Heart right ventricle (tissue), 16 donors: ENCODE measurements at regions of chr19 and their contacts with region 1.

Region 1: DNA sequence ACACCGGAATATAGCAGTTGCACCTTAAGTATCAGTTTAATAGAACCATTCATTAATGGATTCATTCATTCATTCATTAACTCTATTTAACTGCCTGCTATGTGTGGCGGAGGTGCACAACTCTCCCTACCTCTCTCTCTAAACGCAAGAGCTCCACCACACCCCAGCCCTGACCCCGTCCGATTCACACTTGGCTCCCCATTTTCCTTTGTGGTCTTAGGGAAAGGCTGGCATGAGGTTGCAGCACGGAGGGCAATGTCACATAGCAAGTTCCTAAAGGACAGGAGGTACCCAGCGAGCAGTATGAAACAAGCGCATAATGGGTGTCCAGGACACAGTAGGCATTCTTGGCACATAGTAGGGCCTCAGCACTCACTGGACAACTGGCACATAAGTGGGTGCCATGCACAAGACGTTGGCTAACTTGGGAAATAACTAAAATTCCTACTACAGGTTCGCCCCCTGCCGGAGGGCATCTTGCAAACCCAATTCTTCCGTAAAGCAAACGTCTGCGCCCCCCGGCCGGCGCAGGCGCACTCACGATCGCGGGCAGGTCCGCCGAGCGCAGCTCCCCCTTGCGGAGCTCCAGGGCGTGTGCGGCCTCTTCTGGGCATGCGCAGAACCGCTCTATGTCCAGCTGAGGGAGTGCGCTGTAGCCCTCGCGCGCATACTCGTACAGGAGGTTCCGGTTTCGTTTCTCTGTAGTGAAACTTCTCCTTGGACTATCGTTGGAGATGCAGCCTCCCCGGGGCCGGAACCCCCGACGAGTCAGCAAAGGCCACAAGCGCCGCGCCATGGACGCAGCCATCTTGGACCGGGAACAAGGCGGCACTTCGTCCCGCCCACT is at the start of gene SARS2:
- DNase-seq: peak; percentile 91 to 93
- ATAC-seq: peak; percentile 87 to 95 (median 90)
- H3K4me3 ChIP-seq: peak within 1 kb of the TSS; percentile 64 to 93 (median 74)
- H3K27ac ChIP-seq: peak within 1 kb of the TSS; percentile 74 to 94 (median 88)
- H3K4me1 ChIP-seq: peaks cover 9 to 45% (median 30%) of the 10 kb centered on the region in 9 donors
- H3K27me3 ChIP-seq: no peaks in the 10 kb centered on the region
- CTCF ChIP-seq: peak; percentile 99 to 100 (median 100)
- total RNA-seq, gene SARS2: 14.7 to 21.9 (median 18.9) TPM

Region 2: GRCh38 chr19:38402967-38403861 is 526.9 kb before region 1 on chr19 and contains the start of gene FAM98C:
- intact Hi-C with region 1: loop called in 5 of 10 experiments (anchors 2 to 10 kb)
- DNase-seq: peak; percentile 93 to 97
- ATAC-seq: peak; percentile 98 to 100 (median 99)
- H3K4me3 ChIP-seq: peak within 1 kb of the TSS; percentile 68 to 99 (median 87)
- H3K27ac ChIP-seq: peak within 1 kb of the TSS in 9 of 10 donors; percentile 68 to 95 (median 82)
- H3K4me1 ChIP-seq: peaks cover 0 to 17% (median 11%) of the 10 kb centered on the region in 9 donors
- H3K27me3 ChIP-seq: peaks cover 8 to 35% (median 27%) of the 10 kb centered on the region in 7 donors
- CTCF ChIP-seq: peak; percentile 95 to 100 (median 100)
- total RNA-seq, gene FAM98C: 9.8 to 16.1 (median 12.2) TPM

Region 3: GRCh38 chr19:38544034-38544958 is 385.9 kb before region 1 on chr19:
- intact Hi-C with region 1: loop called in 4 of 10 experiments (anchors 5 to 10 kb)
- DNase-seq: peak; percentile 38 to 50
- ATAC-seq: peak; percentile 70 to 86 (median 80)
- H3K4me3 ChIP-seq: peak overlapping the region in 3 of 10 donors; percentile 6 to 17 (median 12)
- H3K27ac ChIP-seq: no peak overlapping the region
- H3K4me1 ChIP-seq: peaks cover 0 to 11% (median 6%) of the 10 kb centered on the region in 9 donors
- H3K27me3 ChIP-seq: no peaks in the 10 kb centered on the region
- CTCF ChIP-seq: peak; percentile 39 to 75 (median 63)

Region 4: DNA sequence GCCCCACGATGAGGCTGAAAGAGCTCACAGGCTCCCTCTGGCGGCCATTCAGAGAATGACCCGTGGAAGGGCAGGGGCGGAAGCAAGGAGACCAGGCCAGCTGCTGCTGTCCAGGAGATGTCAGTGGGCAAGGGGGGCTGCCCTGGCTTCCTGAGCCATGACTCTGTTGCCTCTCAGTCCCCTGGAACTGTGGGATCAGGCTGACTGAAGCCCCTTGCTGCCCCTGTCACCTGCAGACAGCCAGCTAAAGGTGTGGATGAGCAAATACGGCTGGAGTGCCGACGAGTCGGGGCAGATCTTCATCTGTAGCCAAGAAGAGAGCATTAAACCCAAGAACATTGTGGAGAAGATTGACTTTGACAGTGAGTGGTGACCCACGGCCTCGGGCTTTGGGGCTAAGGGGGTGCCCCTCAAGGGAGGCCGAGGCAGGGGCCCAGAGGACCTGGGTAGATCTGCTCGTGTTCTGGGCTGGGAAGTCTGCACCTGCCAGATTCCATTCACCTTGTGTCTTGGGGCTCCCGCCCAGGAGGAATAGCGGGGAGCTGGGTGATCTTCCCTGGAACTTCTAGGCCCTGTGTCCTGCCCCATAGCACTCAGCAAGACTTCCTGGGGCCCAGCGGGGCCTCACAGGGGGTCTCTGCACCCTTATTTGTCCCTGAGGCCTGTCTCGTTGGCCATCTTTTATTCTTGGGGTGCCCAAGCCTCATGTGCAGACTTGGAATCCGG is 295.2 kb before region 1 on chr19:
- intact Hi-C with region 1: loop called in 4 of 10 experiments (anchors 5 to 10 kb)
- DNase-seq: peak; percentile 78 to 82
- ATAC-seq: peak in 7 of 8 donors; percentile 41 to 65 (median 47)
- H3K4me3 ChIP-seq: no peak overlapping the region
- H3K27ac ChIP-seq: peak overlapping the region in 8 of 10 donors; percentile 5 to 89 (median 58)
- H3K4me1 ChIP-seq: peaks cover 0 to 38% (median 29%) of the 10 kb centered on the region in 9 donors
- H3K27me3 ChIP-seq: no peaks in the 10 kb centered on the region
- CTCF ChIP-seq: peak; percentile 87 to 98 (median 95)

Region 5: DNA sequence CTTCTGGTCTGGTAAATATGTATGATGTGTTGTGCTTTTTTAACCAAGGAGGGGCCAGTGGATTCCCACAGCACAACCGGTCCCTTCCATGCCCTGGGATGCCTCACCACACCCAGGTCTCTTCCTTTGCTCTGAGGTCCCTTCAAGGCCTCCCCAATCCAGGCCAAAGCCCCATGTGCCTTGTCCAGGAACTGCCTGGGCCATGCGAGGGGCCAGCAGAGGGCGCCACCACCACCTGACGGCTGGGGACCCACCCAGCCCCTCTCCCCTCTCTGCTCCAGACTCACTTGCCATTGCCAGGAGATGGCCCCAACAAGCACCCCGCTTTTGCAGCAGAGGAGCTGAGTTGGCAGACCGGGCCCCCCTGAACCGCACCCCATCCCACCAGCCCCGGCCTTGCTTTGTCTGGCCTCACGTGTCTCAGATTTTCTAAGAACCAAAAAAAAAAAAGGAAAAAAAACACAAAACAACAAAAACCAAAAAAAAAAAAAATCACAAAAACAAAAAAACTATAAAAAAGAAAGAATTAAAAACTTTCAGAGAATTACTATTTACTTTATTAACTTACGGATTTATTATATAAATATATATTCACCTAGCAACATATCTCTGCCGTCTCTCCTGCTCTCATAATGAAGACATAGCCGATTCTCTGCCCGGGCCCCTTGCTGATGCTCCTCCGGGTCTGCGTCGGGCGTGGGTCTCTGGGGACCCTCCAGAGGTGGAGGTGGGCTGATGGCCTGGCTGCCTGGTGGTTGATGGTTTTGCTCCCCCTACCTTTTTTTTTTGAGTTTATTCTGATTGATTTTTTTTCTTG is 200.3 kb before region 1 on chr19:
- intact Hi-C with region 1: loop called in 3 of 10 experiments (anchors 10 kb)
- DNase-seq: peak; percentile 66 to 80
- ATAC-seq: peak; percentile 27 to 56 (median 42)
- H3K4me3 ChIP-seq: no peak overlapping the region
- H3K27ac ChIP-seq: peak overlapping the region; percentile 2 to 86 (median 69)
- H3K4me1 ChIP-seq: peaks cover 9 to 89% (median 48%) of the 10 kb centered on the region in 9 donors
- H3K27me3 ChIP-seq: no peaks in the 10 kb centered on the region
- CTCF ChIP-seq: peak; percentile 60 to 90 (median 79)

Region 6: DNA sequence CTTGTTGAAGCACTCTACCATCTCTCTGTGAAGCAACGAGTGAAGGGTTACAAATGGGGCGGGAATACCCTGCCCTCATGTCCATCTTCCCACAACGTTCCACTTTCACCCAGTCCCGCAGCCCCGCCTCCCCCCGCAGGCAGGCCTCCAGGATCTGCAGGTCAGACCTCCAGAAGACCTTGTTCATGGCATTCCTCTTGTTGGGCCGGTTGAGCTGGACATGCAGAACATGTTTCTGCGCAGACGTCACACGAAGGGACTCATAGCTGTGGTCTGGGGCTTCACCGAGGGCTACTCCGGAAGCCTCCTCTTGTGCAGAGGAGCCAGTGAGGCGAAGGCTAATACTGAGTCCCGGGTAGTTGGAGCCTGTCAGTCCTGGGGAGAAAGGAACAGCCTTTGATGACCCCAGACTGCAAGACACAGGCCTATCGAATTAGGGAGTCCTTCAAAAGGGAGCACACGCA is 99.0 kb before region 1 on chr19:
- intact Hi-C with region 1: no loop called
- DNase-seq: peak; percentile 54 to 75
- ATAC-seq: peak; percentile 35 to 67 (median 62)
- H3K4me3 ChIP-seq: peak overlapping the region; percentile 64 to 92 (median 74)
- H3K27ac ChIP-seq: peak overlapping the region; percentile 86 to 99 (median 94)
- H3K4me1 ChIP-seq: peaks cover 8 to 55% (median 40%) of the 10 kb centered on the region in 9 donors
- H3K27me3 ChIP-seq: no peaks in the 10 kb centered on the region
- CTCF ChIP-seq: no peak

Region 7: GRCh38 chr19:38964738-38965137 is 34.6 kb after region 1 on chr19:
- intact Hi-C with region 1: no loop called
- DNase-seq: no peak
- ATAC-seq: no peak
- H3K4me3 ChIP-seq: no peak overlapping the region
- H3K27ac ChIP-seq: no peak overlapping the region
- H3K4me1 ChIP-seq: peaks cover 0 to 11% (median 3%) of the 10 kb centered on the region in 9 donors
- H3K27me3 ChIP-seq: no peaks in the 10 kb centered on the region
- CTCF ChIP-seq: no peak